Right ventricle myocardium inferior (tissue), 1 donor: ENCODE measurements at regions of chr19 and their contacts with region 1.

Region 1: GRCh38 chr19:7340959-7341837 is 7.5 kb upstream of the ARHGEF18 start:
- DNase-seq: peak; percentile 90
- ATAC-seq: peak; percentile 54

Region 2: GRCh38 chr19:7101498-7102253 is 239.5 kb before region 1 on chr19:
- intact Hi-C with region 1: loop called (anchors 1 kb)
- DNase-seq: no peak
- ATAC-seq: no peak

Region 3: GRCh38 chr19:7149956-7150705 is 191.1 kb before region 1 on chr19:
- intact Hi-C with region 1: loop called (anchors 2 kb)
- DNase-seq: no peak
- ATAC-seq: no peak

Region 4: DNA sequence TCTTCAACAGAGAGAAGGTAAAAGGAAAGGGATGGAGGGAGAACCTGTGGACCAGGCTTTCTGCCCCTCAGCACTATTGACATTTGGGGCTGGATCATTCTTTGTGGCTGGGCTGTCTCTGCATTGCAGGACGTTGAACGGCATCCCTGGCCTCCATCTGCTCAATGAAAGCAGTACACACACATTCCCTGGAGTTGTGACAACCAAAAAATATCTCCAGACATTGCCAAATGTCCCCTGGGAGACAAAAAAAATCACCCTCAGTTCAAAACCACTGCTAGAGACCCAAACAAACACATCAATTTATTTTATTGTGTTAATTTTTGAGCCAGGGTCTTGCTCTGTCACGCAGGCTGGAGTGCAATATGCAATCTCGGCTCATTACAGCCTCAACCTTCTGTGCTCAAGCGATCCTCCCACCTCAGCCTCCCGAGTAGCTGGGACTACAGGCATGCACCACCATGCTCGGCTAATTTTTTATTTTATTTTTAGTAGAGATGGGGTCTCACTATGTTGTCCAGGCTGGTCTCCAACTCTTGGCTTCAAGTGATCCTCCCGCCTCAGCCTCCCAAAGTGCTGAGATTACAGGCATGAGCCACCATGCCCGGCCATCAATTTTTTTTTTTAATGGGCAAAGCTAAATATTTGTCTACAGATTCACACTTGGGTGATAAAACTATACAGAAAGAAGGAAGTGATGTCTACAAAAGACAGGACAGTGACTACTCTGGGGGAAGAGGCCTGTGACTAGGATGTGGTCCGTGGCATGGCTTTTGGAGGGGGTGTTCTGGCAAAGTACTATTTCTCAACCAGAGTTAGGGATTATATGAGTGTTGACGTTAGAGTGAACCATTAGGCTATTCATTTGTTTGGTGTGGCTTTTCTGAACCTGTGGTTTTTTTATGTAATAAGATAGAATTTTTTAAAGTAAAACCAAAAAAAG is 90.0 kb before region 1 on chr19:
- intact Hi-C with region 1: no loop called
- DNase-seq: no peak
- ATAC-seq: no peak

Region 5: DNA sequence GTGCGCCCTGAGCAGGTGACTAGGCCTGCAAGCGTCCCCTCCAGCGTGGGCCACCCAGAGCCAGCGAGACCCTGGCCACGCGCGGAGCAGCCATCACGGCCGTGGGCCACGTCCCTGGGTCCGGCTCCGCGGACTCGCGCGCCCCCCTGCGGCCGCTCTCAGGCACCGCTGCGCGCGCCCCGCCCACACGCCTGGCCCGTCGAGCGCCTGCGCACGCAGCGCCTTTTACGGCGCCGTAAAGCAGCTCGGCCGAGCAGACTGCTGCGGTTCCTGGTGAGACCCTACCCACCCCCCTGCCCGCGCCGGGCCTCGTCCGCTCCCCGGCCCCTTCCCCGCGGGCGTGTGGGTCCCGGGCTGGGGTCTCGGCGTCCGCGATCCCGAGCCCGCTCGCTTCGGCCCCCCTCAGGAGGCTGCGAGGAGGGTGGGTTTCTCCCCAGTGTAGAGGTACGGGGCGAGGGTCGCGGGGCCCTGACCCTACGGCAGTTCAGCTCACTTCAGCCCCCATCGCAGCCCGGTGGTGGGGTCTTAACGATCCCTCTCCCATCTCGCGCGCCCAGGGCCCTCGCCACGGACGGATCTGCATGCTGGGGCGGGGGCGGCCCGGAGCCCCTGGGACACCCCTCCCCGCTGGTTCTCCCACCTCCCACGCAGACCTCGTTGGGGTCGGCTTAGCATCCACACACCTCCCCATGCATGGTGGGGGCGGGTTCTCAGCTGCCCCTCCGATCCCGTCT is 339.6 kb after region 1 on chr19 and contains the start of gene TRAPPC5:
- intact Hi-C with region 1: no loop called
- DNase-seq: peak; percentile 95
- ATAC-seq: peak; percentile 91
- total RNA-seq, gene TRAPPC5: 139 TPM